ENCODE measurements at regions of chr3 and their contacts with region 1.

Region 1: DNA sequence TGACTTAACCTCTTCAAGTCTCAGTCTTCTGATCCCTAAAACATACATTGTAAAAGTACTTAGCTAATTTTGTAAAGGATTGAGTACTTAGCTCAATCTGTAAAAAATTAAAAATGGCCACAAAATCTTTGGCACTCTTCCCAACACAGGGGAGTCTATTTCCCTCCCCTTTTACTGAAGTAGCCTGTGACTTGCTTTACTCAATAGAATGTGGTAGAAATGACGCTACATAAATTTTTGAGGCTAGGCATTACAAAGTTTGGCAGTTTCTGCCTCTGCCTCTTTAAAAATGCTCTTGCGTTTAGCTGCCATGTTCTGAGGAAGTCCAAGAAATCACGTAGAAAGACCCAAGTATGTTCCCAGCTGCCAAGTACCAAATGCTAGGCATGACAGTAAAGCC is 80.2 kb downstream of the CBLB start:
- DNase-seq: no peak
- ATAC-seq: no peak
- H3K4me3 ChIP-seq: no peak overlapping the region
- H3K4me3 Mint-ChIP-seq: no peak overlapping the region
- H3K27ac ChIP-seq: no peak overlapping the region
- H3K27ac Mint-ChIP-seq: no peak overlapping the region
- H3K4me1 ChIP-seq: peaks cover 5% of the 10 kb centered on the region
- H3K4me1 Mint-ChIP-seq: peaks cover 80% of the 10 kb centered on the region
- H3K27me3 ChIP-seq: no peaks in the 10 kb centered on the region
- H3K27me3 Mint-ChIP-seq: no peaks in the 10 kb centered on the region
- CTCF ChIP-seq: no peak

Region 2: DNA sequence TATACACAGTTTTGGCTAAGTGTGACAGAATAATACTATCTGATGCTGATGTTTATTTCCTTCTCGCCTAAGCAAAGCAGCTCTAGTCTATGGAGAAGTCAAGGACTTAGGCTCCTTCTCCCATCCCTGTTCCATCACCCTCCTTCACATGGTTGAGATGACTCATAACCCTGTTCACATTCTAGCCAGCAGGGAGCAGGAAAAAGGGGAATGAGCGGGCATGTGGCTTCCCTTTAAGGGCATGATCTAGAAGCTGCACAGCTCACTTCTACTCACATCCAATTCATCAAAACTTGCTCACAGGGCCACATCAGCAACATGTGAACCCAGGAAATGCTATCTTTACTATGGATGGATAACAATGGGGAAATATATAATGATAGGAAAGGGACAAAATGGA is 39.4 kb after region 1 on chr3:
- CTCF ChIA-PET with region 1: no interaction called
- POLR2A ChIA-PET with region 1: interaction called, 4 read pairs
- intact Hi-C with region 1: loop called in 1 of 2 experiments (anchors 5 kb)
- DNase-seq: peak in 1 of 14 experiments; percentile 20
- ATAC-seq: no peak
- H3K4me3 ChIP-seq: no peak overlapping the region
- H3K4me3 Mint-ChIP-seq: no peak overlapping the region
- H3K27ac ChIP-seq: peak overlapping the region in 1 of 2 donors; percentile 2
- H3K27ac Mint-ChIP-seq: peak overlapping the region; percentile 63
- H3K4me1 ChIP-seq: peaks cover 20% of the 10 kb centered on the region
- H3K4me1 Mint-ChIP-seq: peaks cover 85% of the 10 kb centered on the region
- H3K27me3 ChIP-seq: no peaks in the 10 kb centered on the region
- H3K27me3 Mint-ChIP-seq: no peaks in the 10 kb centered on the region
- CTCF ChIP-seq: no peak